Posterior cingulate gyrus (tissue), 11 donors: ENCODE measurements at regions of chr20 and their contacts with region 1.

Region 1: DNA sequence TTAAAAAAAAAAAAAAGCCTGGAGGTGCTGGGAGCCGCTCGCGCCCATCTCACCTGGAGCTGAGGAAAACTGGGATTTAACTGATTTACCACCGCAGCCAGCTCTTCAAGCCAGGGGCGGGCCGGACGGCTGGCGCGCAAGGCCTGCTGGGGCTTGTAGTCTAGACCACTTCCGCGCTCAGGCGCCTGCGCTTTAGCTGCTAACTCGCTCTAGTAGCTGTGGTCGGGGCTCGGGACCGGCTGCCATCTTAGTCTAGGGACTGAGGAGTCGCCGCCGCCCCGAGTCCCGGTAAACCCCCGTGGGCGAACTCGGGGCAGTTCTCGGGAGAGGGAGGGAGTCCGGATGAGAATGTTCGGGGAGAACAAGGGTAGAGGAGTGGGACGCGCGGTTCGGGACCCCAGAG is at the start of gene ITCH:
- DNase-seq: peak; percentile 94 to 99 (median 96)

Region 2: GRCh38 chr20:34302723-34303528 is 60.1 kb before region 1 on chr20 and contains the start of gene AHCY:
- intact Hi-C with region 1: loop called (anchors 2 kb)
- DNase-seq: peak; percentile 89 to 99 (median 94)

Region 3: DNA sequence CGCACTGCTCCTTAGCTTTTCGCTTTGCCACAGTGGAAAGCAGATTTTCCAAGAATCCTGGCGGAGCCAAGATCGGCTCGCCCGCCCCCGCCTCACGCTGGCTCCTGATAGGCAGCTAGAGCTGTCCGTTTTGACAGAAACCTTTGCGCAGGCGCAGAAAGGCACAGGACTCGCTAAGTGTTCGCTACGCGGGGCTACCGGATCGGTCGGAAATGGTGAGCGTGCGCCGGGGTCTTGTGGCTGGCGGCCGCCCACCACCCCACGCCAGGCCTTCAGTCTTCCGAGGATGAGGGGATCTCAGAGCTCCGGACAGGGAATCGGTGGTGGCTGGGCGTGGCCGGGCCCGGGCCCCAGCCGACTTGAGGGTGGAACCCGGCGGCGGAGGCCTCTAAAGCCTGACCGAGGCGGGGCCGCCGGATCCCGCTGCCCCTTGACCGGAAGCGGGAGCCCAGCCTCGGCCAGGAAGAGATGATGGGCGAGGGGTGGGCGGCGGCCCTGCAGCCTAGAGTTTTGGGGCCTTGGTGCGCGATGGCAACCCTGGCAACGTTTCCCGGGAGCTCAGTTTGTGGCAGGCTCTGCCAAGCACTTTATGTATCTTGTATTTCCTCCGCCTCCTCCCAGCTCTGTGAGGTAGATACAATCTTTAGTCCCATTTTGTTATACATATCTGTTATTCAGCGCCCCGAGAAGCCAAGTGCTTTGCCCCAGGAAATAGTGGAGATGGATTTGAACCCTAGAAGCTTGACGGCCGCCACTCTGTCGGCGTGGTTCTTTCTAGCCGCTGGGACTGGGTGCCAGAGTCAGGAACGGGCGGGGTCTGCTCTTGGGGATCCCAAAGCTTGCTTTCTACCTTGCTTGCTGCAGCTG is 153.4 kb after region 1 on chr20 and contains the start of gene DYNLRB1:
- intact Hi-C with region 1: loop called (anchors 5 kb)
- DNase-seq: peak; percentile 97 to 99 (median 98)